ENCODE measurements at regions of chr15 and their contacts with region 1.

Region 1: GRCh38 chr15:40307421-40308211 is at the start of gene PLCB2:
- DNase-seq: peak; percentile 80
- H3K4me3 Mint-ChIP-seq: peak within 1 kb of the TSS; percentile 96
- H3K27ac Mint-ChIP-seq: peak within 1 kb of the TSS; percentile 97
- H3K4me1 Mint-ChIP-seq: peaks cover 29% of the 10 kb centered on the region
- H3K27me3 Mint-ChIP-seq: no peaks in the 10 kb centered on the region
- total RNA-seq, gene PLCB2: 65.3 to 70.7 TPM

Region 2: DNA sequence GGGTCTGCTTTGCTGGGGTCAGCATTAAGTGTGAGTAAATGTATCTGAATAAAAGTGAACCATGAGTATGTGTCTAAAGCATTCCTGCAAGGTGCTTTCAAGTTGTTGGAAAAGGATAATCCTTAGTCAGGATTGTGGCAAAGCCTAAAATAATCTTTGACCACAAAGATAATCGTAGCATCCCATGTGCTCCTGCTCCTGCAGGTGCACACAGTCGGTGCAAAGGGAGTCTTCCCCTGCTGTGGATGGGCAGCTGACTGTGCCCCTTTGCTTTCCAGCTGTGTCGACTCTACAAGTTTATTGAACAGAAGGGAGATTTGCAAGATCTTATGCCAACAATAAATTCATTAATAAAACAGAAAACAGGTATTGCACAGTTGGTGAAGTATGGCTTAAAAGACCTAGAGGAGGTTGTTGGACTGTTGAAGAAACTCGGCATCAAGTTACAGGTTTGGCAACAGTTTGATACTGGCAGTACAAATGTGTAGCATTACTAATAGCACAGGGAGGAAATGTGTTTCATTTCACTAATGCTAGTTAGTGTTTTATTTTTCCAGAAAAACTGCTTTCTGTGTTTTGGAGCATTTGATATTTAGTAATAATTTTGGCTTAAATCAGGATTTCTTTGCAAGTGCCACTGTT is 291.3 kb before region 1 on chr15:
- CTCF ChIA-PET with region 1: no interaction called
- POLR2A ChIA-PET with region 1: no interaction called
- intact Hi-C with region 1: no loop called
- DNase-seq: no peak
- H3K4me3 Mint-ChIP-seq: no peak overlapping the region
- H3K27ac Mint-ChIP-seq: no peak overlapping the region
- H3K4me1 Mint-ChIP-seq: no peaks in the 10 kb centered on the region
- H3K27me3 Mint-ChIP-seq: no peaks in the 10 kb centered on the region

Region 3: DNA sequence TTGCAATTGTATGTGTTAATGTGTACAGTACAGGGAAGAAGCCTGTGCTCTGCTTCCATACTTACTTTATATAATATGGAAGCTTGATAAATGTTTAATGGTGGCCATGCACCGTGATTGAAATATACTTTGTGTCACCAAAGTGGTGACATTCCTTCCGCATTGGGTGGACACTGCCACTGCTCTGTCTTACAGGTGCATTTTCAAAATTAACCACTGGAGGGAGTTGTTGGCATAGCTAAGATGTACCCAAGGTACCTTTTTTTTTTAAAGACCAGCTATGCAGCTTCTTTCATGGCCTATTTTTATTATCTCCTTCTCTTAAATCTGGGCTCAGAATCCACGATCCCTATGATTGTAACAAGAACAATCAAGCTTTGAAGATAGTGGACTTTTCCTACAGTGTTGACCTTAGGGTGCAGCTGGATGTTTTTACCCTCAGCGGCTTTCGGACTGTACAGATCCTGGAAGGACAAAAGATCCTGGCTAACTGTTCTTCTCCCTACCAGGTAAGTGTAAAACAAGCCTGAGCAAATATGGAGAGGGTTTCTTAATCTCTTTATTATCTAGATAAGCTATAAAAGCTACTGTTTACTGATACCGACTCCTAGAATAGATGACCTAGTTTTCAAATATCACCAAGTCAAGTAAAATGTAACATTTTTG is 90.3 kb before region 1 on chr15:
- CTCF ChIA-PET with region 1: interaction called, 30 read pairs
- POLR2A ChIA-PET with region 1: no interaction called
- intact Hi-C with region 1: no loop called
- DNase-seq: peak; percentile 40
- H3K4me3 Mint-ChIP-seq: no peak overlapping the region
- H3K27ac Mint-ChIP-seq: no peak overlapping the region
- H3K4me1 Mint-ChIP-seq: no peaks in the 10 kb centered on the region
- H3K27me3 Mint-ChIP-seq: no peaks in the 10 kb centered on the region

Region 4: GRCh38 chr15:40290918-40291574 is 16.6 kb before region 1 on chr15:
- CTCF ChIA-PET with region 1: interaction called, 12 read pairs
- POLR2A ChIA-PET with region 1: interaction called, 5 read pairs
- intact Hi-C with region 1: no loop called
- DNase-seq: no peak
- H3K4me3 Mint-ChIP-seq: no peak overlapping the region
- H3K27ac Mint-ChIP-seq: no peak overlapping the region
- H3K4me1 Mint-ChIP-seq: no peaks in the 10 kb centered on the region
- H3K27me3 Mint-ChIP-seq: no peaks in the 10 kb centered on the region

Region 5: GRCh38 chr15:40338041-40338657 is 30.5 kb after region 1 on chr15:
- CTCF ChIA-PET with region 1: interaction called, 106 read pairs
- POLR2A ChIA-PET with region 1: interaction called, 3 read pairs
- intact Hi-C with region 1: no loop called
- DNase-seq: peak; percentile 84
- H3K4me3 Mint-ChIP-seq: peak overlapping the region; percentile 26
- H3K27ac Mint-ChIP-seq: peak overlapping the region; percentile 5
- H3K4me1 Mint-ChIP-seq: peaks cover 11% of the 10 kb centered on the region
- H3K27me3 Mint-ChIP-seq: no peaks in the 10 kb centered on the region

Region 6: GRCh38 chr15:40421246-40422157 is 113.9 kb after region 1 on chr15:
- CTCF ChIA-PET with region 1: interaction called, 13 read pairs
- POLR2A ChIA-PET with region 1: interaction called, 3 read pairs
- intact Hi-C with region 1: no loop called
- DNase-seq: peak; percentile 87
- H3K4me3 Mint-ChIP-seq: no peak overlapping the region
- H3K27ac Mint-ChIP-seq: no peak overlapping the region
- H3K4me1 Mint-ChIP-seq: no peaks in the 10 kb centered on the region
- H3K27me3 Mint-ChIP-seq: no peaks in the 10 kb centered on the region

Measured in activated CD4-positive, alpha-beta memory T cell treated with anti-CD3 and anti-CD28 coated beads for 36 hours (primary cell).